ENCODE measurements at regions of chr7 and their contacts with region 1.

Region 1: GRCh38 chr7:131203291-131203976 is 124.2 kb upstream of the MKLN1 start:
- DNase-seq: no peak
- H3K4me3 ChIP-seq: no peak overlapping the region
- H3K4me3 Mint-ChIP-seq: no peak overlapping the region
- H3K27ac ChIP-seq: no peak overlapping the region
- H3K27ac Mint-ChIP-seq: peak overlapping the region in 1 of 7 donors; percentile 45
- H3K4me1 ChIP-seq: no peaks in the 10 kb centered on the region
- H3K4me1 Mint-ChIP-seq: no peaks in the 10 kb centered on the region
- H3K27me3 ChIP-seq: no peaks in the 10 kb centered on the region
- H3K27me3 Mint-ChIP-seq: peaks cover 0 to 8% (median 1%) of the 10 kb centered on the region in 3 donors
- CTCF ChIP-seq: no peak

Region 2: DNA sequence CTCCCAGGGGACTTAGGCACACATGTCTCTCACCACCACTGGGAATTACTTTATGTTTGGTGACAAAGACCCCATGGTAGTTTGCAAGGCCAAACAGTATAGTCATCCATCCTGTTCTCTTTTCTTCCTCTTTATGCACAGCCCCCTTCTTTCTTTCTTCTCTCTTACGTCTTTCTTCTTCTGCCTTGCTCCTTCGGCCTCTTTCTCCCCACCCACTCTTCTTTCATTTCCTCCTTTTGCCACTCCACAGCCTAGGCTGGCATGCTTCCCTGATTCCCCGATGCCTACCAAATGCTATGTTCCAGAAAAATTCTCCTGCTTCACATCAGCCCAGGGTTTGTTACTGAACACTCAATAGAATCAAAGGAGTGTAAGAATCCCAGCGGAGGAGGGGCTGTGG is 61.8 kb after region 1 on chr7:
- intact Hi-C with region 1: loop called in 1 of 2 experiments (anchors 10 kb)
- DNase-seq: peak in 2 of 3 donors; percentile 31 to 38
- H3K4me3 ChIP-seq: peak overlapping the region in 1 of 3 experiments; percentile 14
- H3K4me3 Mint-ChIP-seq: peak overlapping the region in 1 of 2 donors; percentile 74
- H3K27ac ChIP-seq: peak overlapping the region in 1 of 2 donors; percentile 37
- H3K27ac Mint-ChIP-seq: peak overlapping the region in 6 of 7 donors; percentile 25 to 75 (median 66)
- H3K4me1 ChIP-seq: peaks cover 14 to 18% of the 10 kb centered on the region in 2 donors
- H3K4me1 Mint-ChIP-seq: peaks cover 18% of the 10 kb centered on the region
- H3K27me3 ChIP-seq: no peaks in the 10 kb centered on the region
- H3K27me3 Mint-ChIP-seq: no peaks in the 10 kb centered on the region
- CTCF ChIP-seq: no peak

Region 3: DNA sequence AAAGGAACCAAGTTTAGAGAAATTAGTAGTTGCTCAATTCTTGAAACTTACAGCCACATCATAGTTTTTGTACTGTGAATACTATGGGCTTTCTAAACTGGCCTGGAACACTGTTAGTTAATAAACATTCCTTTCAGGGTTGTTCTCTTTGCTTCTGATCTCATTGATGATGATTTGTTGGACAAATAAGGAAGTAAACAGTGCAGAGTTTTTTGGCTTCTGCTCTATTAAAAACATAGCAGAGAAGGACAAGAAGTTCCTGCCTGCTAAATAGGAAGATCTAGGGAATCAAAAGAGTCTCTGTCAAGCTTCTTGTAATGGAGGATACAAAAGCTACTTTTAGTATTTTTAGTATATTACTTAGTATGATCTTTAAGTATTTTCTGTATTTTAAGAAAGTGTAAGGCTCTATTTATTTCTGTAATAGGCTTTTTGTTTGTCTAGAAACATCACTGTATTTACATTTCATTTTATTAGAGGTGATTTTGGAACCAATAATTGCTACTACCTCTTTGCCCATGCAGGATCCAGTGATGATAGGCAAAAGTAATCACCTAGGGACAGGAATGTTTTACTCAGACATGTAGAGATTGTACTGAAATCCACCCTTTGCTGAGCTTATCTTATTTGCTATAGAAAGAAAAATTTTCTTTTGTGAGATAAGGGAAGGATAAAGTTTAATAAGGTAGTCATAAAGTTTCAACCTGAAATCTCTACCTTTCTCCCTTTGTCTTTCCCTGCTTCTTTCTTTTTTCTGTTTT is 197.6 kb after region 1 on chr7:
- intact Hi-C with region 1: no loop called
- DNase-seq: peak in 1 of 3 donors; percentile 2
- H3K4me3 ChIP-seq: no peak overlapping the region
- H3K4me3 Mint-ChIP-seq: no peak overlapping the region
- H3K27ac ChIP-seq: peak overlapping the region in 1 of 2 donors; percentile 3
- H3K27ac Mint-ChIP-seq: peak overlapping the region in 1 of 7 donors; percentile 35
- H3K4me1 ChIP-seq: no peaks in the 10 kb centered on the region
- H3K4me1 Mint-ChIP-seq: no peaks in the 10 kb centered on the region
- H3K27me3 ChIP-seq: no peaks in the 10 kb centered on the region
- H3K27me3 Mint-ChIP-seq: peaks cover 0 to 2% (median 0%) of the 10 kb centered on the region in 3 donors
- CTCF ChIP-seq: no peak